Naive thymus-derived CD4-positive, alpha-beta T cell (primary cell): ENCODE measurements at regions of chr1 and their contacts with region 1.

Region 1: DNA sequence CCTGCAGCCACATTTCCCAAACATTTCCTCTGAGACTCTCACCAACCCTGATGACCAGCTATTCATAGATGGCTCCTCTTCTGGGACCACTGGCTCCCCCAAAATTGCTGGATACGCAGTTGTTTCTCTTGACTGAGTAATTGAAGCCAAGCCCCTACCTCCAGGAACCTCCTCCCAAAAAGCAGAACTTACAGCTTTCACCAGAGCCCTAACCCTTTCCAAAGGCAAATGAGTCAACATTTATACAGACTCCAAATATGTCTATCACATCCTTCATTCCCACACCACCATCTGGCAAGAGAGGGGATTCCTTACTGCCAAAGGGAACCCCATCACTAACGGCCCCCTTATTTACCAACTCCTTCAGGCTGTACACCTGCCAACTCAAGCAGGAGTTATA is 20.3 kb upstream of the CA6 start:
- DNase-seq: no peak
- ATAC-seq: no peak
- H3K4me3 ChIP-seq: peak overlapping the region; percentile 56
- H3K4me3 Mint-ChIP-seq: no peak overlapping the region
- H3K27ac ChIP-seq: peak overlapping the region; percentile 69
- H3K27ac Mint-ChIP-seq: no peak overlapping the region
- H3K4me1 ChIP-seq: peaks cover 0 to 64% of the 10 kb centered on the region in 2 donors
- H3K4me1 Mint-ChIP-seq: peaks cover 16 to 36% (median 24%) of the 10 kb centered on the region in 7 donors
- H3K27me3 ChIP-seq: no peaks in the 10 kb centered on the region
- H3K27me3 Mint-ChIP-seq: no peaks in the 10 kb centered on the region

Region 2: GRCh38 chr1:8941906-8942305 is 16.5 kb after region 1 on chr1:
- CTCF ChIA-PET with region 1: interaction called, 4 read pairs
- POLR2A ChIA-PET with region 1: interaction called, 11 read pairs
- intact Hi-C with region 1: loop called in 1 of 2 experiments (anchors 2 kb)
- DNase-seq: no peak
- ATAC-seq: no peak
- H3K4me3 ChIP-seq: no peak overlapping the region
- H3K4me3 Mint-ChIP-seq: peak overlapping the region in 1 of 10 donors; percentile 44
- H3K27ac ChIP-seq: no peak overlapping the region
- H3K27ac Mint-ChIP-seq: peak overlapping the region in 4 of 9 donors; percentile 38 to 86 (median 63)
- H3K4me1 ChIP-seq: peaks cover 19 to 80% of the 10 kb centered on the region in 2 donors
- H3K4me1 Mint-ChIP-seq: peaks cover 65 to 90% (median 81%) of the 10 kb centered on the region in 7 donors
- H3K27me3 ChIP-seq: no peaks in the 10 kb centered on the region
- H3K27me3 Mint-ChIP-seq: no peaks in the 10 kb centered on the region

Region 3: GRCh38 chr1:8947127-8947691 is 21.8 kb after region 1 on chr1:
- CTCF ChIA-PET with region 1: no interaction called
- POLR2A ChIA-PET with region 1: interaction called, 13 read pairs
- intact Hi-C with region 1: loop called in 1 of 2 experiments (anchors 2 kb)
- DNase-seq: peak in 2 of 9 donors; percentile 19 to 36
- ATAC-seq: no peak
- H3K4me3 ChIP-seq: no peak overlapping the region
- H3K4me3 Mint-ChIP-seq: peak overlapping the region; percentile 21 to 80 (median 61)
- H3K27ac ChIP-seq: peak overlapping the region; percentile 57
- H3K27ac Mint-ChIP-seq: peak overlapping the region; percentile 68 to 98 (median 90)
- H3K4me1 ChIP-seq: peaks cover 16 to 68% of the 10 kb centered on the region in 2 donors
- H3K4me1 Mint-ChIP-seq: peaks cover 42 to 82% (median 61%) of the 10 kb centered on the region in 7 donors
- H3K27me3 ChIP-seq: no peaks in the 10 kb centered on the region
- H3K27me3 Mint-ChIP-seq: no peaks in the 10 kb centered on the region

Region 4: DNA sequence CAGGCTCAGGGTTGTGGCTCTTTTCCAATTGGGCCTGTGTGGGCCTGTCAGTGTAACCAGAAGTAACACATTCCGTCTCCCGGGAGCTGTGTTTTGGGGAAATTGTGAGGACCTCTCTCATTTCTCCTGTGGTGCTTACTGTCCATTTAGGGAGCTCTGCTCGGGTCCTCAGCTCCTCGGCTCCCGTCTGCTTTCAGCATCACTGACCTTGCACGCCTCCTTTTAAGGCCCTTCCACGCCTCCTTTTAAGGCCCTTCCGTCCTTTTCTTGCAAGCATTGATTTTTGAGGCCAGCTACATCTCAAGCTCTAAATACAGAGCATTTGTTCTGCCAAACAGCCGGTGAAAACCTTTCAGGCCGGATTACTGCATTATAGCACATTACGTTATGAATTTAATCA is 30.0 kb after region 1 on chr1:
- CTCF ChIA-PET with region 1: no interaction called
- POLR2A ChIA-PET with region 1: interaction called, 14 read pairs
- intact Hi-C with region 1: no loop called
- DNase-seq: no peak
- ATAC-seq: no peak
- H3K4me3 ChIP-seq: no peak overlapping the region
- H3K4me3 Mint-ChIP-seq: no peak overlapping the region
- H3K27ac ChIP-seq: no peak overlapping the region
- H3K27ac Mint-ChIP-seq: peak overlapping the region in 7 of 9 donors; percentile 24 to 84 (median 70)
- H3K4me1 ChIP-seq: peaks cover 0 to 18% of the 10 kb centered on the region in 2 donors
- H3K4me1 Mint-ChIP-seq: peaks cover 0 to 58% (median 37%) of the 10 kb centered on the region in 7 donors
- H3K27me3 ChIP-seq: no peaks in the 10 kb centered on the region
- H3K27me3 Mint-ChIP-seq: no peaks in the 10 kb centered on the region

Region 5: GRCh38 chr1:8962812-8963530 is 37.6 kb after region 1 on chr1:
- CTCF ChIA-PET with region 1: interaction called, 4 read pairs
- POLR2A ChIA-PET with region 1: interaction called, 66 read pairs
- intact Hi-C with region 1: no loop called
- DNase-seq: peak in 2 of 9 donors; percentile 32 to 38
- ATAC-seq: peak; percentile 74
- H3K4me3 ChIP-seq: no peak overlapping the region
- H3K4me3 Mint-ChIP-seq: peak overlapping the region; percentile 50 to 100 (median 74)
- H3K27ac ChIP-seq: peak overlapping the region; percentile 58
- H3K27ac Mint-ChIP-seq: peak overlapping the region; percentile 49 to 97 (median 89)
- H3K4me1 ChIP-seq: peaks cover 5 to 55% of the 10 kb centered on the region in 2 donors
- H3K4me1 Mint-ChIP-seq: peaks cover 42 to 86% (median 80%) of the 10 kb centered on the region in 7 donors
- H3K27me3 ChIP-seq: no peaks in the 10 kb centered on the region
- H3K27me3 Mint-ChIP-seq: no peaks in the 10 kb centered on the region

Region 6: GRCh38 chr1:8970870-8971337 is 45.5 kb after region 1 on chr1:
- CTCF ChIA-PET with region 1: interaction called, 18 read pairs
- POLR2A ChIA-PET with region 1: interaction called, 66 read pairs
- intact Hi-C with region 1: loop called in 1 of 2 experiments (anchors 2 kb)
- DNase-seq: peak in 8 of 9 donors; percentile 59 to 84 (median 76)
- ATAC-seq: peak; percentile 91
- H3K4me3 ChIP-seq: peak overlapping the region; percentile 59
- H3K4me3 Mint-ChIP-seq: peak overlapping the region; percentile 94 to 100 (median 100)
- H3K27ac ChIP-seq: peak overlapping the region; percentile 87
- H3K27ac Mint-ChIP-seq: peak overlapping the region; percentile 89 to 99 (median 98)
- H3K4me1 ChIP-seq: peaks cover 7 to 22% of the 10 kb centered on the region in 2 donors
- H3K4me1 Mint-ChIP-seq: peaks cover 34 to 60% (median 52%) of the 10 kb centered on the region in 7 donors
- H3K27me3 ChIP-seq: no peaks in the 10 kb centered on the region
- H3K27me3 Mint-ChIP-seq: no peaks in the 10 kb centered on the region

Region 7: DNA sequence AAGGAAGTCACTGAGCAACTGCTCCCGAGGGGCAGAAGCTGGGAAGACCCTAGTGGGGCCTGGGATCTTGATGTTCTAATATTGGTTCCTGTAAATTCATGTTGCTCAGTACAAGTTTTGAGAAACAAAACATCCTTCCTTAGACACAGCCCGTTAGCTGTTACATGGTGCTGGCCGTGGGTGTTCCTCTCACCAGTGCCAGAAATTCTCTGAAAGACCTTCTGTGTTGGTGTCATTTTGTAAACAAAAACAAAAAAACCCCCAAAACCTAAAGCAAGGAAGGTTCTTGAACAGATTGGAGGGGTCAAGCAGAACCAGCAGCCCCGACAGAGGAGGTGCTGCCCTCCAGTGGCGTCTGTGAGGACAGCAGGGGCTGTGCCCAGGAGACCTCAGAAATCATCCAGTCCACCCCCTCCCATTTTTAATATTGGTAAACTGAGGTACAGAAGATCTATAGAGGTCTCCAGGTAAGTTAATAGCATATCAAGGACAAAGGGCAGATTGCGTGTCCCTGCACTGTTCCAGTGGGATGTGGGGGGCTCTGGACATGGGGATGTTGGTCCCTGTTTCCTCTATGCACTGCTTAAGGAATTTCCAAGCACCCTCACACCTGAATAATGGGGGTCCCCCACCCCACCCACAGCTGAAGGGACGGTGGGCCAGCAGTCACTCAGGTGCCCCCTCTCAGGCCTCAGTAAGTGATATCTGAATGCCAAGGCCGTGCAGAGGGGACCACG is 62.6 kb after region 1 on chr1:
- CTCF ChIA-PET with region 1: interaction called, 158 read pairs
- POLR2A ChIA-PET with region 1: interaction called, 127 read pairs
- intact Hi-C with region 1: no loop called
- DNase-seq: peak; percentile 19 to 78 (median 65)
- ATAC-seq: peak; percentile 89
- H3K4me3 ChIP-seq: no peak overlapping the region
- H3K4me3 Mint-ChIP-seq: peak overlapping the region; percentile 36 to 85 (median 73)
- H3K27ac ChIP-seq: peak overlapping the region; percentile 65
- H3K27ac Mint-ChIP-seq: peak overlapping the region; percentile 57 to 99 (median 93)
- H3K4me1 ChIP-seq: peaks cover 4 to 22% of the 10 kb centered on the region in 2 donors
- H3K4me1 Mint-ChIP-seq: peaks cover 9 to 63% (median 41%) of the 10 kb centered on the region in 7 donors
- H3K27me3 ChIP-seq: no peaks in the 10 kb centered on the region
- H3K27me3 Mint-ChIP-seq: no peaks in the 10 kb centered on the region

Region 8: GRCh38 chr1:9081473-9081872 is 156.1 kb after region 1 on chr1:
- CTCF ChIA-PET with region 1: no interaction called
- POLR2A ChIA-PET with region 1: no interaction called
- intact Hi-C with region 1: no loop called
- DNase-seq: no peak
- ATAC-seq: no peak
- H3K4me3 ChIP-seq: no peak overlapping the region
- H3K4me3 Mint-ChIP-seq: no peak overlapping the region
- H3K27ac ChIP-seq: no peak overlapping the region
- H3K27ac Mint-ChIP-seq: peak overlapping the region in 1 of 9 donors; percentile 32
- H3K4me1 ChIP-seq: no peaks in the 10 kb centered on the region
- H3K4me1 Mint-ChIP-seq: peaks cover 18 to 59% (median 28%) of the 10 kb centered on the region in 7 donors
- H3K27me3 ChIP-seq: no peaks in the 10 kb centered on the region
- H3K27me3 Mint-ChIP-seq: peaks cover 1 to 19% (median 11%) of the 10 kb centered on the region in 5 donors